ENCODE measurements at regions of chr19 and their contacts with region 1.

Region 1: DNA sequence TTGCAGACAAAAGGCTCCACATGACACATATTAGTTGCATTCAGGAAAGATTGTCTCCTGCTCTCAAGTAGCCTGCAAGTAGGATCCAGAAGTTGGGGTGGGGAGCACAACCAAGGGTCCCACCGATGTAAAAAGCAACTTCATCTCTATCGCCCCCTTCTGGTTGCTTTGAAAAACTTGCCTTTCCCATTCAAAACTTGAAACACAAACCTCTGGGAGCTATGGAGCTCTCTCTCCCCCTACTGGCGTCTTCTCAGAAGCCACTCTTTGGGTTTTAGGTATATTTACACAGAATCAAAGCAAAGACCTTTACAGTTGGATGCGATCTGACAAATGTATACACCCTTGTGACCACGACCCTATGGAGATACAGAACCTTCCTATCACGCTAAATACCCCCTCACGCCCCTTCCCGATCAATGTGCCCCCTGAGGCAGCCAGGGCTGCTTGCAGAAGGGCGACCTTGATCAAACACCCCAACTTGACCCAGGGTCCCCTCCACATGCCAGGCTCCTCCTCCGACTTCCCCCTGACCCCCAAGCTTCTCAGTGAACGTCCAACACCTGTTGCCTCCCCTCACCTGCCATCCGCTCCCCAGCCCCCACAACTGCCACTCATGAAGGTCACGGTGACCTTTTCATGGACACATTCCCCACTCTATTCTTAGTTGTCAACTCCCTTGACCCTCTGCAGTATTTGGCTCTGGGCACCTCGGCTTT is 10.1 kb downstream of the NOSIP start:
- DNase-seq: peak in 1 of 3 donors; percentile 57
- ATAC-seq: peak; percentile 85 to 94 (median 90)
- H3K4me3 ChIP-seq: no peak overlapping the region
- H3K27ac ChIP-seq: no peak overlapping the region
- H3K4me1 ChIP-seq: peaks cover 0 to 13% (median 5%) of the 10 kb centered on the region in 4 donors
- H3K27me3 ChIP-seq: no peaks in the 10 kb centered on the region
- CTCF ChIP-seq: peak; percentile 97 to 99 (median 98)
- POLR2A ChIP-seq: no peak

Region 2: DNA sequence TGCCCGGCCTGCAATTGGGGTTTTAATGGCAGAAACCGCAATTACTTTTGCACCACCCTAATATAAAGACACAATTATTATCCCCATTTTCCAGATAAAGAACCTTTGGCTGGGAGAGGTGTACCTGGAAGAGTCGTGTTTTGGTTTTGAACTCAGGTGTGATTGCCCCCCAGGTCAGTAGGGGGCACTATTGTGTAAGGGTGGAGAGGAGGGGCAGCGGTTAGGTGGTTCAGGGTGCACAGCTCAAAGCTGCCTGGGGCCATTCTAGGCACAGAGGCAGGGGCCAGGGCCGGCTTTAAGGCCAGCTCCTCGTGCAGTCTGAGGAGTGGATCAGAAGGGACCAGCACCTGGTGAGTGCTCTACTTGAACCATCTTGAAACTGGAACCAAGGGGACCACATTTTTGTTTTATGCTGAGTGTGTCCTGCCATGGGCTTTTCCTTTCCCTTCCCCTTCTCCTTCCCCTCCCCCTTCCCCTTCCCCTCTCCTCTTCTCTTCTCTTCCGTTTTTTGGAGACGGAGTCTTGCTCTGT is 63.7 kb before region 1 on chr19:
- intact Hi-C with region 1: loop called in 1 of 2 experiments (anchors 5 kb)
- DNase-seq: peak in 2 of 3 donors; percentile 56 to 73
- ATAC-seq: peak; percentile 83 to 93 (median 87)
- H3K4me3 ChIP-seq: no peak overlapping the region
- H3K27ac ChIP-seq: no peak overlapping the region
- H3K4me1 ChIP-seq: no peaks in the 10 kb centered on the region
- H3K27me3 ChIP-seq: no peaks in the 10 kb centered on the region
- CTCF ChIP-seq: peak; percentile 70 to 81 (median 72)
- POLR2A ChIP-seq: no peak

Region 3: DNA sequence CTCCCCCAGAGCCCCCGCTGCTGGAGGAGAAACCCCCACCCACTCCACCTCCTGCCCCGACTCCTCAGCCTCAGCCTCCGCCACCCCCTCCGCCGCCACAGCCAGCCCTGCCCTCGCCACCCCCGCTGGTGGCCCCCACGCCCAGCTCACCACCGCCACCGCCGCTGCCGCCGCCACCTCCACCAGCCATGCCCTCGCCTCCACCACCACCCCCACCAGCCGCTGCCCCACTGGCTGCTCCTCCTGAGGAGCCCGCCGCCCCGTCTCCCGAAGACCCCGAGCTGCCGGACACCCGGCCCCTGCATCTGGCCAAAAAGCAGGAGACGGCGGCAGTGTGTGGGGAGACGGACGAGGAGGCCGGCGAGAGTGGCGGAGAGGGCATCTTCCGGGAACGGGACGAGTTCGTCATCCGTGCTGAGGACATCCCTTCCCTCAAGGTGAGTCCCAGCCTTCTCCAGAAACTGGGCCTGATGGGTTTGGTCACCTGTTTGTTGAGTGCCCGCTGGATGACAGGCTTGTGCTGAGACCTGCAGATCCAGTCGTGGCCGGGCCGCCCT is 31.3 kb after region 1 on chr19:
- intact Hi-C with region 1: no loop called
- DNase-seq: no peak
- ATAC-seq: no peak
- H3K4me3 ChIP-seq: no peak overlapping the region
- H3K27ac ChIP-seq: no peak overlapping the region
- H3K4me1 ChIP-seq: no peaks in the 10 kb centered on the region
- H3K27me3 ChIP-seq: no peaks in the 10 kb centered on the region
- CTCF ChIP-seq: no peak
- POLR2A ChIP-seq: no peak

Region 4: GRCh38 chr19:49680398-49681351 is 110.4 kb after region 1 on chr19:
- intact Hi-C with region 1: loop called in 1 of 2 experiments (anchors 10 kb)
- DNase-seq: peak; percentile 90 to 91 (median 91)
- ATAC-seq: peak; percentile 33 to 44 (median 38)
- H3K4me3 ChIP-seq: peak overlapping the region in 2 of 3 donors; percentile 5 to 18
- H3K27ac ChIP-seq: no peak overlapping the region
- H3K4me1 ChIP-seq: peaks cover 0 to 14% (median 4%) of the 10 kb centered on the region in 4 donors
- H3K27me3 ChIP-seq: no peaks in the 10 kb centered on the region
- CTCF ChIP-seq: peak in 3 of 4 donors; percentile 96 to 100 (median 100)
- POLR2A ChIP-seq: no peak